H1 (cell line): ENCODE measurements at regions of chr17 and their contacts with region 1.

Region 1: GRCh38 chr17:6069539-6070429 is at the start of gene WSCD1:
- DNase-seq: peak in 1 of 2 experiments; percentile 55
- H3K4me3 ChIP-seq: peak within 1 kb of the TSS; percentile 52 to 83 (median 78)
- H3K27ac ChIP-seq: no peak within 1 kb of the TSS
- H3K4me1 ChIP-seq: peaks cover 3 to 18% (median 11%) of the 10 kb centered on the region in 4 experiments; a peak in 6 of 7 replicates
- H3K27me3 ChIP-seq: peaks cover 0 to 22% (median 16%) of the 10 kb centered on the region in 4 experiments; a peak in 6 of 7 replicates
- CTCF ChIP-seq: no peak
- EP300 ChIP-seq: no peak
- POLR2A ChIP-seq: no peak
- RAD21 ChIP-seq: no peak
- total RNA-seq, gene WSCD1: 39.0 and 47.4 TPM in 2 replicates

Region 2: GRCh38 chr17:6090253-6090652 is 20.5 kb after region 1 on chr17:
- CTCF ChIA-PET with region 1: interaction called, 14 read pairs
- POLR2A ChIA-PET with region 1: interaction called, 3 read pairs
- DNase-seq: no peak
- H3K4me3 ChIP-seq: no peak overlapping the region
- H3K27ac ChIP-seq: no peak overlapping the region
- H3K4me1 ChIP-seq: peaks cover 0 to 2% (median 0%) of the 10 kb centered on the region in 4 experiments; a peak in 1 of 7 replicates
- H3K27me3 ChIP-seq: no peaks in the 10 kb centered on the region
- CTCF ChIP-seq: no peak
- EP300 ChIP-seq: no peak
- POLR2A ChIP-seq: no peak
- RAD21 ChIP-seq: no peak

Region 3: GRCh38 chr17:6320407-6320806 is 250.6 kb after region 1 on chr17:
- CTCF ChIA-PET with region 1: no interaction called
- POLR2A ChIA-PET with region 1: no interaction called
- DNase-seq: no peak
- H3K4me3 ChIP-seq: no peak overlapping the region
- H3K27ac ChIP-seq: no peak overlapping the region
- H3K4me1 ChIP-seq: no peaks in the 10 kb centered on the region
- H3K27me3 ChIP-seq: no peaks in the 10 kb centered on the region; a peak in 1 of 7 replicates
- CTCF ChIP-seq: no peak
- EP300 ChIP-seq: no peak
- POLR2A ChIP-seq: no peak
- RAD21 ChIP-seq: no peak